Activated CD4-positive, alpha-beta memory T cell treated with anti-CD3 and anti-CD28 coated beads, Interleukin-2, amount 10 ng/mL, durations not matched to agents 7 days and 5 days (primary cell): ENCODE measurements at regions of chr19 and their contacts with region 1.

Region 1: DNA sequence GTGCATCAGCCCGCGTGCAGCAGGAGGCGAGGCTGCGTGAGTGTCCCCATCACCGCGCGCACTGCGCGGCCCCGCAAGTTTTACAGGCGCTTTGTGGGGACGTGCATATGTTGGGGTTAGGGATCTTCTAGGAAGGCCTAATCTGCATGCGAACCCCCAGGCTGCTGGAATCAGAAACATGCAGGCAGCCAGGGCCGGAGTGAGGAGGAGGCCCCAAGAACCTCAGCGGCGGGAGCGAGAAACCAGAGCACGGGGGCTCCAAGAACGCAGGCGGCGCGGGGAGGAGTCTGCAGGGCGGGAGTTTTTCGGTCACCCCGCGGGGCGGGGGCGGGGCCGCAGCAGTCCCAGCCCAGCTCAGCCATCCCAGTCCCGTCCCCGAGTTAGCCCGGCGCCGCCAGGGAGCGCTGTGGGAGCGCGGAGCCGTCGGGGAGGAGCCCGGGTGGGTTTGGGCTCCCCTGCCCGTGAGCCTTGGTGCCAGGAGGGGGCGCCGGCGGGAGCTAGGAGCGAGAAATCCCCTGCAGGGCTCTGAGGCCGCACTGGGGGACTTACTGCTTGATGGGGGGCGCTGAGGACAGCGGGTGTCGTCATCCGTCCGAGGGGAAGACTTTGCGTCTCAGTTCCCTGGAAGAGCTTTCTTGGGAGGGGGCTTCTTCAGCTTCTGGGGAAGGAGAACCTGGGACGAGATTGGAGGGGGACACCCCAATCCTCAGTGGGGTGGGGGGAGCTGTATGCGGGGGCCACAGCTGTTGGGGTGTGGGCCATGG is 933 bp upstream of the NRTN start:
- DNase-seq: peak; percentile 94
- H3K4me3 Mint-ChIP-seq: peak overlapping the region; percentile 63
- H3K27ac Mint-ChIP-seq: no peak overlapping the region
- H3K4me1 Mint-ChIP-seq: peaks cover 23% of the 10 kb centered on the region
- H3K27me3 Mint-ChIP-seq: peaks cover 38% of the 10 kb centered on the region

Region 2: GRCh38 chr19:5774921-5775320 is 29.0 kb before region 1 on chr19:
- CTCF ChIA-PET with region 1: no interaction called
- POLR2A ChIA-PET with region 1: no interaction called
- DNase-seq: no peak
- H3K4me3 Mint-ChIP-seq: no peak overlapping the region
- H3K27ac Mint-ChIP-seq: no peak overlapping the region
- H3K4me1 Mint-ChIP-seq: no peaks in the 10 kb centered on the region
- H3K27me3 Mint-ChIP-seq: no peaks in the 10 kb centered on the region

Region 3: GRCh38 chr19:5790573-5791520 is 13.1 kb before region 1 on chr19 and contains the start of gene DUS3L:
- CTCF ChIA-PET with region 1: interaction called, 54 read pairs
- POLR2A ChIA-PET with region 1: interaction called, 4 read pairs
- DNase-seq: peak; percentile 97
- H3K4me3 Mint-ChIP-seq: peak within 1 kb of the TSS; percentile 99
- H3K27ac Mint-ChIP-seq: peak within 1 kb of the TSS; percentile 100
- H3K4me1 Mint-ChIP-seq: peaks cover 16% of the 10 kb centered on the region
- H3K27me3 Mint-ChIP-seq: no peaks in the 10 kb centered on the region
- total RNA-seq, gene DUS3L: 38.3 to 42.1 TPM